AG04449 (cell line): ENCODE measurements at regions of chr6 and their contacts with region 1.

Region 1: GRCh38 chr6:151323791-151324487 is 67.4 kb downstream of the ZBTB2 start:
- DNase-seq: peak; percentile 71
- H3K4me3 ChIP-seq: no peak overlapping the region
- CTCF ChIP-seq: peak; percentile 96

Region 2: DNA sequence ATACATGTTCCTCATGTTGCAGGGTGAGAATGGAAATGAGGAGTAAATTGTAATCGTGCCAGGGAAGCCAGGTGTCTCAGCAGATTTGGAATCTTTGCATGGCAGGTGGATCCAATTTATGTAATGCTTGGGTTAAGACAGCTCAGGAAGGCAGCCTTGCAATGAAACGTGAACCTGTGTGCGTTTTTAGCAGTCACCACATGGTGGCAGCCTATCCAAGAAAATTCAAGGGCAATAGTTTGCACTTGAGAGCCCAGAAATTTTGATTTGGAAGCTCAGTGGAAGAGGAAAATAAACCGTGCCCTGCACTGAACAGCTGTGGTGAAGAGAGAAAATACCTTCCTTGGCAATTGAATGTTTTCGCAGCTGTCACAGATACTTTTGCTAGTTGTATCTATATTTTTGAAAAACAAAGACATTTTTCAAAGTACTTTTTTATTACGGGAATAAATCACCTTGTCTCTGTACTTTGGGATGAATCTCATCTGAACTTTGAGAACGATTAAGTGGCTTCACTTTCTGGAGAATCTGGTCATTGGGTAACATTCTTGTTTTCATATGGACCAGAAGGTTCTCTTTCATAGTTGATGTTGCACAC is 432.0 kb before region 1 on chr6:
- CTCF ChIA-PET with region 1: interaction called, 156 read pairs
- POLR2A ChIA-PET with region 1: interaction called, 3 read pairs
- DNase-seq: peak; percentile 45
- H3K4me3 ChIP-seq: no peak overlapping the region
- CTCF ChIP-seq: peak; percentile 77

Region 3: GRCh38 chr6:150987371-150987828 is 336.5 kb before region 1 on chr6:
- CTCF ChIA-PET with region 1: interaction called, 10 read pairs
- POLR2A ChIA-PET with region 1: no interaction called
- DNase-seq: no peak
- H3K4me3 ChIP-seq: no peak overlapping the region
- CTCF ChIP-seq: no peak

Region 4: DNA sequence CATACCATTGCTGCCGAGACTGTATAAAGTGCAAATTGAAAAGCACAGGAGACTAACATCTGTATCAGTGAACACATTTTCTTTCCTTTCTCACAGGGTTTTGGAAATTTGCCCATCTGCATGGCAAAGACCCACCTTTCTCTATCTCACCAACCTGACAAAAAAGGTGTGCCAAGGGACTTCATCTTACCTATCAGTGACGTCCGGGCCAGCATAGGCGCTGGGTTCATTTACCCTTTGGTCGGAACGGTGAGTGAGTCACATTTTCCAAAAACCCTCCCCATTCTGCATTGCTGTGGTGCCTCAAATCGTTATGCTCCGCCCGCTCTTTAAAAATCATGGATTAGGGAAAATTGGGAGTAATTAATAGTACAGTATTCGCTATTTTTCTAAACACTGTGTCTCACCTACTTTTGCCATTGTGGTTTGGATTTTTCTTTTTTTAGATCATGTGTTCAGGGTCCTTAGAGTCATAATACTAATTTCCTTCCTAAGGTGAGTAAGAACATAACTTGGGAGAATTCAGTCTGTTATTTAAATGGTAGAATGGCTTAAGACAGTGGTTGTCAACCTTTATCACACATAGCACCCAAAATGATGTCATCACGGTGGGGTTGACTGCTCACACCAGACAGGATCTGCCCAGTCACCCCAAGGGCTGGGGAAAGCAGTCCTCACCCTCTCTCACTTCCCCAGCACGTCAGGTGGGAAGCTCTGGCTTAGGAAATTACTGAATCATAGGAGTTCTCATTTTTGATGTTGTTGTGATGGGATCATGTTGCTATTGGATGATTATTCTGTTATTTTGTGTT is 286.9 kb before region 1 on chr6:
- CTCF ChIA-PET with region 1: interaction called, 13 read pairs
- POLR2A ChIA-PET with region 1: no interaction called
- DNase-seq: no peak
- H3K4me3 ChIP-seq: no peak overlapping the region
- CTCF ChIP-seq: no peak

Region 5: GRCh38 chr6:151179321-151179720 is 144.6 kb before region 1 on chr6:
- CTCF ChIA-PET with region 1: interaction called, 11 read pairs
- POLR2A ChIA-PET with region 1: no interaction called
- DNase-seq: peak; percentile 31
- H3K4me3 ChIP-seq: no peak overlapping the region
- CTCF ChIP-seq: no peak

Region 6: DNA sequence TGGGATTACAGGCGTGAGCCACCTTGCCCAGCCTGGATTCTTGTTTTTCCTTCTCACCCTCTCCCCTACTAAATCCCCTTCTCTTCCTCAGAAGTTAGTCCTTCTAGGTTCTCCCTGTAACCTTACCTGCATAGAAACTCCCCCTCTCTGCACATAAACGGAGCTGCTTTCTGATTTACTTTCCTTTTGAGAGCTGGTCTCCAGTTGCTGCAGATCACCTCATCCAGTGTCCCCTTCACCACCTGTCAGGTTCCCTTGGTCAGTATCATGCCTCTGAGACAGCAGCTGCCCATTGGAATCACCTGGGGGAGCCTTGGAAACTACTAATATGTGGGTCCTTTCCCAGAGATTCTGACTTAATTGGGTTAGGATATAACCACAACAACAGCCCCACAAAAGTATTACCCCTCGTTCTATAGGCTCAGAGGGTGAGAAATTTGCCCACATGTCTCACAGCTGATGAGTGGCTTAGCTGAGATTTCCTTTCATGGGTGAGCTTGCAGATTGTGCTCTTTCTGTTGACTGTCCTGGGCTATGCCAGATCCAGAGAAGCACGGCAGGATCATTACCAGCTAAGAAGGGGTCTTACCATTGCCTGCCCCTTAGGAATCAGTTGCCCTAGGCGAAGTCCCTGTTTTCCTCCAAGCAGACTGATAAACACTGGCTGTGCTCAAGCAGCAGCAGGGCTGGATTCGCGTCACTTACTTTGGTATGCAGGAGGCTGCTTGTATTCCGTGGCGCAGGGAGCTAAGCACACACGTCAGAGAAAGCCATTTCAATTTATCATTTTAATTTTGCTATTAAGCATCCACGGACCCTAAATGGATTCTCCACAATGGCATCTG is 32.8 kb before region 1 on chr6:
- CTCF ChIA-PET with region 1: interaction called, 30 read pairs
- POLR2A ChIA-PET with region 1: no interaction called
- DNase-seq: peak; percentile 92
- H3K4me3 ChIP-seq: peak overlapping the region; percentile 2; the same call in 1 of the 2 replicates
- CTCF ChIP-seq: no peak